CD14-positive monocyte (primary cell): ENCODE measurements at regions of chr22 and their contacts with region 1.

Region 1: DNA sequence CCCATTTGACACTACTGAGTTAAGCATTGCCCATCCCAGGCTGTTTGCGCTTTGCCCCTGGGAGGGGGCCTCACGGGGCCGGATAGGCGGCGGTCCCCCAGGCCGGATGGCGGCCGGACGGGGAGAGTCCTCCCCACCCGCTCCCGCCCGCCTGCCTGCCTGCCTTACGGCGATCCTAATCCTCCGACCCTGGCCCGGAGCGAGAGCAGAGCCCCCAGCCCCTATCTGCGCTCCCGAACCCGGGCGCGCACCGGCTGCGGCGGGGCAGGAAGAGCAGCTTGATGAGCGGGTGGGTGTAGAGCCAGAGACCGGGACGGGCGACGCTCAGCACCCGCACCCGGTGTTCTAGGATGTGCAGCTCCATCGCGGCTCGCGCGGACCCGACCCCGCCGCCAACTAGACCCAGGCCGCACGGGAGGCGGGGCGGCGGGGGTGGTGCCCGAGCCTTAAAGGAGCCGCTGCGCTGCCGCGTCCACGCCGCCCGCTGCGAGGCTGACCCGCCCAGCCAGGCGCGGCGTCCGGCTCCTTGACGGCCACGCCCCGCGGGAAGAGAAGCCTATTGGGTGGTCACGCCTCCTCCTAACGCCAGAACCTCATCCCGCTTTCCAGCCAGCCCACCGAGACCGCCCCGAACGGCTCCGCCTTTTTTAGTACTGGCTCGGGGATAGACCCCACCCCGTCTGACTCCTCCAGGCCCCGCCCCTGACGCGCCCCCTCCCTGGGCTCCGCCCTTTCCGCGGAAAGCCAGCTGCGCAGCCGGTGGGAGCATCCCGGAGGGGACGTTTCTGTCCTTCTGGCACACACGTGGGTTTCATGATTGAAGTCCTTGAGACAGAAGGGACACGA is at the start of gene CASTOR1:
- DNase-seq: peak; percentile 86 to 93 (median 89)
- H3K4me3 ChIP-seq: peak within 1 kb of the TSS; percentile 54 to 82 (median 62)
- H3K4me3 Mint-ChIP-seq: peak within 1 kb of the TSS; percentile 83 to 86
- H3K27ac ChIP-seq: peak within 1 kb of the TSS; percentile 31 to 46
- H3K27ac Mint-ChIP-seq: peak within 1 kb of the TSS; percentile 58 to 90 (median 82)
- H3K4me1 ChIP-seq: peaks cover 26 to 44% of the 10 kb centered on the region in 2 donors
- H3K4me1 Mint-ChIP-seq: peaks cover 33% of the 10 kb centered on the region
- H3K27me3 ChIP-seq: no peaks in the 10 kb centered on the region
- H3K27me3 Mint-ChIP-seq: peaks cover 0 to 3% (median 1%) of the 10 kb centered on the region in 3 donors
- CTCF ChIP-seq: no peak
- polyA plus RNA-seq, gene CASTOR1: 6.4 to 15.5 (median 6.5) TPM

Region 2: GRCh38 chr22:30104501-30105156 is 184.7 kb before region 1 on chr22:
- intact Hi-C with region 1: loop called in 1 of 2 experiments (anchors 10 kb)
- DNase-seq: no peak
- H3K4me3 ChIP-seq: no peak overlapping the region
- H3K4me3 Mint-ChIP-seq: peak overlapping the region in 1 of 2 donors; percentile 11
- H3K27ac ChIP-seq: no peak overlapping the region
- H3K27ac Mint-ChIP-seq: no peak overlapping the region
- H3K4me1 ChIP-seq: no peaks in the 10 kb centered on the region
- H3K4me1 Mint-ChIP-seq: peaks cover 6% of the 10 kb centered on the region
- H3K27me3 ChIP-seq: no peaks in the 10 kb centered on the region
- H3K27me3 Mint-ChIP-seq: peaks cover 0 to 3% (median 2%) of the 10 kb centered on the region in 3 donors
- CTCF ChIP-seq: no peak

Region 3: GRCh38 chr22:30262917-30263741 is 26.2 kb before region 1 on chr22:
- intact Hi-C with region 1: loop called in 1 of 2 experiments (anchors 2 kb)
- DNase-seq: peak; percentile 98 to 100 (median 98)
- H3K4me3 ChIP-seq: peak overlapping the region in 1 of 3 experiments; percentile 56
- H3K4me3 Mint-ChIP-seq: peak overlapping the region; percentile 78 to 94
- H3K27ac ChIP-seq: peak overlapping the region; percentile 34 to 82
- H3K27ac Mint-ChIP-seq: peak overlapping the region; percentile 76 to 99 (median 99)
- H3K4me1 ChIP-seq: peaks cover 75 to 79% of the 10 kb centered on the region in 2 donors
- H3K4me1 Mint-ChIP-seq: peaks cover 73% of the 10 kb centered on the region
- H3K27me3 ChIP-seq: no peaks in the 10 kb centered on the region
- H3K27me3 Mint-ChIP-seq: peaks cover 12 to 16% (median 12%) of the 10 kb centered on the region in 3 donors
- CTCF ChIP-seq: peak; percentile 100

Region 4: GRCh38 chr22:30326706-30327362 is 37.5 kb after region 1 on chr22 and contains the start of gene TBC1D10A:
- intact Hi-C with region 1: loop called (anchors 5 kb)
- DNase-seq: peak; percentile 76 to 85 (median 81)
- H3K4me3 ChIP-seq: peak within 1 kb of the TSS; percentile 60 to 88 (median 86)
- H3K4me3 Mint-ChIP-seq: peak within 1 kb of the TSS; percentile 88 to 91
- H3K27ac ChIP-seq: peak within 1 kb of the TSS; percentile 39 to 64
- H3K27ac Mint-ChIP-seq: peak within 1 kb of the TSS; percentile 57 to 90 (median 76)
- H3K4me1 ChIP-seq: peaks cover 36 to 48% of the 10 kb centered on the region in 2 donors
- H3K4me1 Mint-ChIP-seq: peaks cover 46% of the 10 kb centered on the region
- H3K27me3 ChIP-seq: no peaks in the 10 kb centered on the region
- H3K27me3 Mint-ChIP-seq: no peaks in the 10 kb centered on the region
- CTCF ChIP-seq: no peak
- polyA plus RNA-seq, gene TBC1D10A: 13.4 to 38.3 (median 21.8) TPM

Region 5: DNA sequence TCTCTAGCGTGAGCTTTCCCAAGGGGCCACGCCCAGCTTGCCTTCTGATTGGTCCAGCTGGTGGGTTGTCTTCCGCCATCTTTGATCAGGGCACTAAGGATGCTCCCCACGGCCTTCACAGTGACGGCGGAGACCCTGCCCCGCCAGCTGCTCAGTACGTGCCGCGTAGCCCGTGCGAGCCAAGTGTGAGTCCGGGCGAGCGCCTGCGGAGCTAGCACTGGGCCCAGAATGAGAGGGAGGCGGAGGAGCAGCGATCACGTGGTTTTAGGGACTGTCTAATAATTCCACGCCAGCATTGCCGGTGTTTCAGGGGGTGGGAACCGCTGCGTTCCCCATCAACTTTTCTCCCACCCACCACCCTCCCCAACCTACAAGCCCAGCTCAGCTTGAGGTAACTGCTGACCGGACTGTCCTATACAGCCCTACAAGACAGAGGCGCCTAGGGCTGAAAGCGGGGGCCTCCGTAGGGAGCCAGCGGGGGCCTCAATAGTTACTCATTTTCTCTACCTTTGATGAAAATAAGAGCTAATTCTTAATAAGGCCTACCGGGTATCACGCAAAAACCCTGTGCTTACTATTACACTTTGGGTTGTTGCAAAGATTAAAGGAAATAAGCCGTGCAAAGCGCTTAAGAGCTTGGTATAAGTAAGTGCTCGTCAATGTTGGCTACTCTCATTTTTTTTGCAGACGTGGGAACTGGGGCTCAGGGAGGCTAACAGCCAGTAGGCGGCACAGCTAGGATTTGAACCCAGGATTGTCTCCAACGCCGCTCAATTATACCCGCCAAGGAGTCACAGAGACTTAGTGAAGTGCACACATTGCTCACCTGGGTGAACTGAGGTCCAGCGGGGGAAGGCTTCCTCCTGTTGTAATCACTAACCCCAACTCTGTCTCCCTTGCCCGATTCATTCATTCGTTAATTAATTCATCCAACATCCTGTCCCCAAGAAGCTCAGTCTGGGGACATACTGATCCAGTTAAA is 134.9 kb after region 1 on chr22:
- intact Hi-C with region 1: loop called in 1 of 2 experiments (anchors 5 kb)
- DNase-seq: peak; percentile 99 to 100 (median 99)
- H3K4me3 ChIP-seq: peak overlapping the region; percentile 54 to 88 (median 78)
- H3K4me3 Mint-ChIP-seq: peak overlapping the region; percentile 92 to 96
- H3K27ac ChIP-seq: peak overlapping the region; percentile 81 to 97
- H3K27ac Mint-ChIP-seq: peak overlapping the region; percentile 93 to 98 (median 97)
- H3K4me1 ChIP-seq: peaks cover 40 to 46% of the 10 kb centered on the region in 2 donors
- H3K4me1 Mint-ChIP-seq: peaks cover 40% of the 10 kb centered on the region
- H3K27me3 ChIP-seq: no peaks in the 10 kb centered on the region
- H3K27me3 Mint-ChIP-seq: peaks cover 0 to 2% (median 0%) of the 10 kb centered on the region in 3 donors
- CTCF ChIP-seq: no peak